ENCODE measurements at regions of chr20 and their contacts with region 1.

Region 1: GRCh38 chr20:63253438-63254236 is 626 bp downstream of the NKAIN4 start:
- DNase-seq: no peak
- H3K4me3 ChIP-seq: peak overlapping the region; percentile 13
- H3K4me3 Mint-ChIP-seq: no peak overlapping the region
- H3K27ac Mint-ChIP-seq: no peak overlapping the region
- H3K4me1 ChIP-seq: peaks cover 56% of the 10 kb centered on the region
- H3K4me1 Mint-ChIP-seq: peaks cover 57% of the 10 kb centered on the region
- H3K27me3 ChIP-seq: no peaks in the 10 kb centered on the region
- H3K27me3 Mint-ChIP-seq: no peaks in the 10 kb centered on the region
- CTCF ChIP-seq: no peak

Region 2: DNA sequence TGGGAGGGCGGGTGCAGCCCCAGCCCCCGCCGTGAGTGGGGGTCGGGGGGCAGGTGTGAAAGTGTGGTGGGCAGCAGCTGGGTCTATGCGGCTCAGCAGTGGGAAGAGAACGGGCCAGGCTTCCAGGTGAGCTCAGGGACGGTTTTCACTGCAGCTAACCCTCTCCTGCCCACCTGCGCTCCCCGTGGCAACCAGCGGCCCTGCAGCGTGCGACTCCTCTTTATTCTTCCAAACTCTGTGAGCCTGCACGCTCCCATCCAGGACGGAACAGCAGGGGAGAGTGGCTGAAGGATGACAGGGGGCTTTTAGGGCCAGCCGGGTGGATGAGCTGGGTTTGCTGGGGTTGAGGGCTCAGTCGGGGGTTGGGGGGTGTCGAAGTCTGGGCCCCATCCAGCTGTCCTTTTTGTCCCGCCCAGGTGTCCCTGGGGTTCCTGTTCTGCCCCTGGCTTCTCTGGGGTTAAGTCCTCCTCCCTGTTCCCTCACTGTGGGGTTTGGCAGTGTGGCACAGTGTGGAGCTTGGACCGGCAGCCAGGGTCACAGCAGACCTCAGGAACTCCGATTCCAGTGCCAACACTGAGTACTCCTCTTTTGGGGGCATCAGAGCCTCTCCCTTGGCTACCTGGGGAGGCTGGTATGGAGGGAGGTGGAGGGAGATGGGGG is 18.8 kb before region 1 on chr20:
- CTCF ChIA-PET with region 1: interaction called, 10 read pairs
- POLR2A ChIA-PET with region 1: no interaction called
- intact Hi-C with region 1: no loop called
- DNase-seq: peak; percentile 87 to 89
- H3K4me3 ChIP-seq: no peak overlapping the region
- H3K4me3 Mint-ChIP-seq: peak overlapping the region; percentile 34
- H3K27ac Mint-ChIP-seq: no peak overlapping the region
- H3K4me1 ChIP-seq: peaks cover 53% of the 10 kb centered on the region
- H3K4me1 Mint-ChIP-seq: peaks cover 24% of the 10 kb centered on the region
- H3K27me3 ChIP-seq: no peaks in the 10 kb centered on the region
- H3K27me3 Mint-ChIP-seq: no peaks in the 10 kb centered on the region
- CTCF ChIP-seq: peak; percentile 89 to 96

Region 3: DNA sequence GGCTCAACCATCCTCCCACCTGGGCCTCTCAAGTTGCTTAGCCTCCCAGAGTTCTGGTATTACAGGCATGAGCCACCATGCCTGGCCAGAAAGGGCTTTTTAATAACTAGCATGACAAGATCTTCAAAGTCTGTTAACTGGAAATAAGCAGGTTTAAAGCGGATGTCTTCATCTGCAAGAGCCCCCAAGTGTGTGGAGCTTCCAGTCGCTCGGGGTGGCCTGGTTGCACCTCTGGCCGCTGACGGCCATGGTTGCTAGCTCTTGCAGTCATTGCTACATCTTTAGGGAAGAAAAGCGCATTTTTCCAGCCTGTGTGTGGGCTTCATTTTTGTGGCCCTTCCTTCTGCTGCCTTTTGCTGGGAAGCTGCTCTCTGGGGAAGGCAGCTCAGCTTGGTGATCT is 26.7 kb after region 1 on chr20:
- CTCF ChIA-PET with region 1: no interaction called
- POLR2A ChIA-PET with region 1: no interaction called
- intact Hi-C with region 1: no loop called
- DNase-seq: no peak
- H3K4me3 ChIP-seq: no peak overlapping the region
- H3K4me3 Mint-ChIP-seq: no peak overlapping the region
- H3K27ac Mint-ChIP-seq: no peak overlapping the region
- H3K4me1 ChIP-seq: no peaks in the 10 kb centered on the region
- H3K4me1 Mint-ChIP-seq: no peaks in the 10 kb centered on the region
- H3K27me3 ChIP-seq: no peaks in the 10 kb centered on the region
- H3K27me3 Mint-ChIP-seq: no peaks in the 10 kb centered on the region
- CTCF ChIP-seq: no peak

Region 4: GRCh38 chr20:63290677-63291472 is 37.2 kb after region 1 on chr20:
- CTCF ChIA-PET with region 1: interaction called, 6 read pairs
- POLR2A ChIA-PET with region 1: interaction called, 10 read pairs
- intact Hi-C with region 1: no loop called
- DNase-seq: peak in 1 of 2 experiments; percentile 84
- H3K4me3 ChIP-seq: no peak overlapping the region
- H3K4me3 Mint-ChIP-seq: no peak overlapping the region
- H3K27ac Mint-ChIP-seq: peak overlapping the region; percentile 48
- H3K4me1 ChIP-seq: 0 out of 2 replicates have a peak, but pooled peaks cover 5% of the 10 kb centered on the region
- H3K4me1 Mint-ChIP-seq: no peaks in the 10 kb centered on the region
- H3K27me3 ChIP-seq: no peaks in the 10 kb centered on the region
- H3K27me3 Mint-ChIP-seq: no peaks in the 10 kb centered on the region
- CTCF ChIP-seq: peak; percentile 81 to 84